HEK293 (cell line): ENCODE measurements at regions of chr7 and their contacts with region 1.

Region 1: DNA sequence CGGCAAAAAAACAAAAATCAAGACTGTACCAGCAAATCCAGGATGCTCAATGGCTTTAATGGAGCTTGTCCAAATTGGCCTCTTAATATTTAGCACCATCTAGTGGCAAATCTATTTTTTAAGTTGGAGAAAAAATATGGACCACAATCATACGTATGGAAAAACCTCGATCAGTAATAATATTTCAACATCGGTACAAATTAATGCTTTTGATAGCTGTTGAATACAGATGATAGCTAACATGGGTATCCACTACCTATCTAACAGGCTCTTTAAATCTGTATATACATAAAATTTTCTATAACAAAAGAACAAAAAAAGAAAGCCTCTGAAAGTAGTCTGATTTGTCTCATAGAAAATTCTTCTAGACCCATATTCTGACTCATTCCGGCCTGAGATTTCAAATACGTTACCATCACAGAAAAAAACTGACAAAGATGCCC is 29.2 kb downstream of the COA1 start:
- H3K4me3 ChIP-seq: no peak overlapping the region
- H3K27ac ChIP-seq: no peak overlapping the region
- H3K4me1 ChIP-seq: no peaks in the 10 kb centered on the region
- CTCF ChIP-seq: no peak

Region 2: GRCh38 chr7:43590862-43591550 is 109.1 kb before region 1 on chr7:
- CTCF ChIA-PET with region 1: interaction called, 12 read pairs
- POLR2A ChIA-PET with region 1: no interaction called
- H3K4me3 ChIP-seq: no peak overlapping the region
- H3K27ac ChIP-seq: no peak overlapping the region
- H3K4me1 ChIP-seq: peaks cover 22% of the 10 kb centered on the region
- CTCF ChIP-seq: no peak

Region 3: DNA sequence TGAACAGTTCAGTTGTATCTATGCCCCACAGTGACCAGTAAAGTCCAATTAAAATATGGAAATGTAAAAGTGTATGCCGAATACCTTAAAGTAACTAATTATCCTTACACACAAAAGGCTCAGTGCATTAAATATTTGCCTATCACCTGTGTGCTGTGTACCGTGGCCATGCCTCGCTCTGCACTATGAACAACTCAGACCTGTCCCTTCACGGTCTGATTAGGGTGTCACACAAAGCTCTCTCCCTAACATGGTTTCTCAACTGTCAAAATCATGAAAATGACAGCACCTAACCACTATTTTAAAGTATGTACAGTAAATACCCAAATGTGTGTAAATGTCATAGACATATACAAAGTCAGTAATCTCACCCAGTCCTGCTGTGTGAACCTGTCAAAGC is 74.1 kb before region 1 on chr7:
- CTCF ChIA-PET with region 1: interaction called, 10 read pairs
- POLR2A ChIA-PET with region 1: no interaction called
- H3K4me3 ChIP-seq: no peak overlapping the region
- H3K27ac ChIP-seq: no peak overlapping the region
- H3K4me1 ChIP-seq: no peaks in the 10 kb centered on the region
- CTCF ChIP-seq: no peak

Region 4: GRCh38 chr7:43721193-43721806 is 21.2 kb after region 1 on chr7:
- CTCF ChIA-PET with region 1: interaction called, 13 read pairs
- POLR2A ChIA-PET with region 1: no interaction called
- H3K4me3 ChIP-seq: no peak overlapping the region
- H3K27ac ChIP-seq: no peak overlapping the region
- H3K4me1 ChIP-seq: no peaks in the 10 kb centered on the region
- CTCF ChIP-seq: no peak

Region 5: DNA sequence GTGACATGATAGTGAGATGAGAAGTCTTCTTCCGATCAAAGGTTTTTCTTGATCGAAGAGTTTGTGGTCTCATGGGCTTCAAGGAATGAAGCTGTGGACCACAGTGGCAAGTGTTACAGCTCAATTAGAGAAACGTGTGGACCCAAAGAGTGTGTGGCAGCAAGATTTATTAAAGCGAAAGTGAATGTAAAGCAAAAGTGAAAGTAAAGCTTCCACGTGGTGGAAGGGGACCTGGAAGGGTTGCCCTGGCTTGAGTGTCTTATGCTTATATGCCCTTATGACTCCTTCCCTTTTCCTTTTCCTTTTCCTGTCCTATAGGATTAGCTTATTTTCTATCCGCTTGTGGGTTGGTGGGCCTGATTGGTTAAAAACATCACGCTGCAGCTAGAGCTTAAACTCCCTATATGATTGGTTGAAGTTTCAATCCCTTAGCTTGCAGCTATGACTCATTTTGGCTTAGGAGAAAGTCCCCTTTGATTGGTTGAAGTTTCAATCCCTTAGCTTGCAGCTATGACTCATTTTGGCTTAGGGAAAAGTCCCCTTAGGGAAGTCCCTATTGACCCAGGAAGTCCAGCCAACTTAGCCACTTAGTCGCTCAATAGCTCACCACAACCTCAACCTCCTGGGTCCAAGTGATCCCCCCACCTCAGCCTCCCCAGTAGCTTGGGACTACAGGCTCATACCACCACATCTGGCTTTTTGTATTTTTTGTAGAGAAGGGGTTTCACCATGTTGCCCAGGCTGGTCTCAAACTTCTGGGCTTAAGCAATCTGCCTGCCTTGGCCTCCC is 134.6 kb after region 1 on chr7:
- CTCF ChIA-PET with region 1: interaction called, 36 read pairs
- POLR2A ChIA-PET with region 1: no interaction called
- H3K4me3 ChIP-seq: no peak overlapping the region
- H3K27ac ChIP-seq: no peak overlapping the region
- H3K4me1 ChIP-seq: no peaks in the 10 kb centered on the region; the same call in 1 of the 2 replicates
- CTCF ChIP-seq: no peak

Region 6: DNA sequence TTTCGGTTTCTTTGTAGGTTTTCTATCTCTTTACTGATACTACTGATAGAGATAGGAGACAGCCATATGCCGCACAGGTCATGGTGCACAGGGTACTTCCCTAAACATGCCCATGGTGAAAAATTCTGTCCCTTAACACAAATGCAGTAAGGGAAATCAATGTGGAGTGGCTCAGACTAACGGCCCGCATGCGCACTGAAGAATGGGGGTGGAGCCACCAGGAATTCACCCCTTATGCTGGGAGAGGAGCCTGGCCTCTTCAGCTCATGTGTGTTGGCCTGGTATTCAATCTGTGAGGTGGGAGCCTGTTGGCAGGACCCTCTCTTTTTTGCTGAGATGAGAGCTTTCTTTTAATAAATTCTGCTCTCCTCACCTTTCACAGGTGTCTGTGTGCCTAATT is 214.7 kb after region 1 on chr7:
- CTCF ChIA-PET with region 1: no interaction called
- POLR2A ChIA-PET with region 1: no interaction called
- H3K4me3 ChIP-seq: no peak overlapping the region
- H3K27ac ChIP-seq: no peak overlapping the region
- H3K4me1 ChIP-seq: no peaks in the 10 kb centered on the region
- CTCF ChIP-seq: no peak